ENCODE measurements at regions of chr6 and their contacts with region 1.

Region 1: GRCh38 chr6:132780770-132781371 is 17.6 kb downstream of the SLC18B1 start:
- DNase-seq: no peak

Region 2: DNA sequence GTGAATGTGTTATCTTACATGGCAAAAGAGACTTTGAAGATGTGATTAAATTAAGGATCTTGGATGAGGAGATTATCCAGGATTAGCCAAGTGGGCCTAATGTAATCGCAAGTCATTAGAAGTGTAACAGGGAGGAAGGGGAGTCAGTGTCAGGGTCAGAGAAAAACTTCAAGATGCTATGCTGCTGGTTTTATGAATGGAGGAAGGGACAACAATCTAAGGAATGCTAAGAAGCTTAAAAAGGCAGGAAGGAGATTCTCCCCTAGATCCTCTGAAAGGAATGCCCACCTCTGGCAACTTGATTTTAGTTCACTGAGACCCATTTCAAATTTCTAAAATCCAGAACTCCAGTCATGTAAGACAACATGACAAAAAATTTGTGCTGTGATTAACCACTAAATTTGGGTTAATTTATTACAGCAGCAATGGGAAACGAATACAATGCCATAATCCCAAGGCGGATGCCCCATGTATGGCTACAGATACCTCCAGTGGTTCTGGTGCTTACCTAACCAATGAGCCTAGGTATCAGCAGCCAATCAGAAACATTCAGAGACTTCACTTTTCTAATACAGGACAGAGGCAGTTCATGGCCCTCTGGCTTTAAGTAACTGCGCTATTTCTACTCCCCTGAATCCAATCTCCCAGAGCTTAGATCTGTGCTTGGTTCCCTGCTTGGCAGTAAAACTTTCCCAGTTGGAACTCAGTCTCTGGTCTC is 232.0 kb before region 1 on chr6:
- intact Hi-C with region 1: loop called in 1 of 2 experiments (anchors 10 kb)
- DNase-seq: no peak

Region 3: DNA sequence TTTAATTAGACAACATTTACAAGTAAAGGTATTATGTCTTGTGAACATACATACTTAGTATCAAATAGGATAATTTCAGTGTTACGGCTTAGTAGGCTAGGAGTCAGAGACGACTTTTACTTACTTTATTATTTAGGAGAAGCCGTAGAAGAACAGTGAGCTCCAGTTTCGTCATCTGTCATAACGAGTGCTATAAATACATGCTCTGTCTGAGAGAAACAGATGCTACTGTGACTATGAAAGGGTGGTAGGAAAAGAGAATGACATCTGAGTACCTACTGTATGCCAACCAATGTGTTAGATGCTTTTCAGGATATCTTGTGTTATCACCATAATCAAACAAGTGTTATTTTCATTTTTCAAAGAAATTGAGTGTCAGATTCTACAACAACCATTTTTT is 579.3 kb after region 1 on chr6:
- intact Hi-C with region 1: no loop called
- DNase-seq: no peak

Measured in posterior vena cava (tissue), 2 donors.